ENCODE measurements at regions of chr7 and their contacts with region 1.

Region 1: GRCh38 chr7:121337398-121337797 is 8.6 kb downstream of the WNT16 start:
- DNase-seq: no peak
- ATAC-seq: peak; percentile 78
- H3K4me3 ChIP-seq: no peak overlapping the region
- H3K27ac ChIP-seq: no peak overlapping the region
- H3K4me1 ChIP-seq: no peaks in the 10 kb centered on the region
- H3K27me3 ChIP-seq: no peaks in the 10 kb centered on the region
- CTCF ChIP-seq: peak in 2 of 3 experiments; percentile 20 to 50; a peak in 3 of 6 replicates
- EP300 ChIP-seq: no peak
- POLR2A ChIP-seq: no peak
- RAD21 ChIP-seq: peak; percentile 50

Region 2: DNA sequence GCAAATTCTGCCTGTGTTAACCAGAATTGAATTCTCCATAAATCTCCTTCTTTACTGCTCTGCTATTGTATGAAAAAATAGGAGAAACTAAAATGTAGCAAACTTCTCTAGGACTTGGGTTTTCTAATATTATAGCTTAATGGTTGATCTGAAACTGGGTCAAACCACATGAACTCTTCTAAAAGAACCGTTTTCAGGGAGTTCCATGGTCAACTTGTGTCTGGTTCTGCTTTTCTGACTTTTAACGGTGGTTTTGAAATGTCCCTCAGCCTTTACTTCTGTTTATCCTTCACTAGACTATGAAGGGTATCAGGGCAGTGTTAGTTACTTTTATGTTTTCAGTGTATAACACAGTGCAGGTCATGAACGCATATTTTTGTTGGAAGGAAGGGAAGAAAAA is 721.7 kb before region 1 on chr7:
- CTCF ChIA-PET with region 1: no interaction called
- POLR2A ChIA-PET with region 1: no interaction called
- RAD21 ChIA-PET with region 1: no interaction called
- SMC1A ChIA-PET with region 1: no interaction called
- in situ Hi-C with region 1: no loop called
- intact Hi-C with region 1: no loop called
- DNase-seq: peak; percentile 17
- ATAC-seq: peak; percentile 89
- H3K4me3 ChIP-seq: no peak overlapping the region
- H3K27ac ChIP-seq: no peak overlapping the region
- H3K4me1 ChIP-seq: peaks cover 10% of the 10 kb centered on the region
- H3K27me3 ChIP-seq: no peaks in the 10 kb centered on the region
- CTCF ChIP-seq: no peak
- EP300 ChIP-seq: peak in 1 of 2 experiments; percentile 40; a peak in 1 of 4 replicates
- POLR2A ChIP-seq: no peak
- RAD21 ChIP-seq: no peak

Region 3: GRCh38 chr7:121163699-121164098 is 173.7 kb before region 1 on chr7:
- CTCF ChIA-PET with region 1: interaction called, 20 read pairs
- POLR2A ChIA-PET with region 1: no interaction called
- RAD21 ChIA-PET with region 1: interaction called, 7 read pairs
- SMC1A ChIA-PET with region 1: interaction called, 10 read pairs
- in situ Hi-C with region 1: no loop called
- intact Hi-C with region 1: no loop called
- DNase-seq: no peak
- ATAC-seq: peak; percentile 66
- H3K4me3 ChIP-seq: no peak overlapping the region
- H3K27ac ChIP-seq: no peak overlapping the region
- H3K4me1 ChIP-seq: no peaks in the 10 kb centered on the region
- H3K27me3 ChIP-seq: no peaks in the 10 kb centered on the region
- CTCF ChIP-seq: peak in 1 of 3 experiments; percentile 34; a peak in 1 of 6 replicates
- EP300 ChIP-seq: no peak
- POLR2A ChIP-seq: no peak
- RAD21 ChIP-seq: peak; percentile 46; the same call in 1 of the 2 replicates